MCF 10A (cell line): ENCODE measurements at regions of chrX and their contacts with region 1.

Region 1: GRCh38 chrX:149470955-149471354 is 34.2 kb downstream of the IDS start:
- DNase-seq: peak; percentile 77
- H3K4me3 Mint-ChIP-seq: no peak overlapping the region
- H3K27ac Mint-ChIP-seq: no peak overlapping the region
- H3K4me1 Mint-ChIP-seq: no peaks in the 10 kb centered on the region
- H3K27me3 Mint-ChIP-seq: no peaks in the 10 kb centered on the region
- CTCF ChIP-seq: peak; percentile 82

Region 2: GRCh38 chrX:148133105-148133725 is 1337.7 kb before region 1 on chrX:
- CTCF ChIA-PET with region 1: interaction called, 27 read pairs
- POLR2A ChIA-PET with region 1: interaction called, 6 read pairs
- intact Hi-C with region 1: loop called (anchors 1 kb)
- DNase-seq: peak; percentile 22
- H3K4me3 Mint-ChIP-seq: no peak overlapping the region
- H3K27ac Mint-ChIP-seq: no peak overlapping the region
- H3K4me1 Mint-ChIP-seq: peaks cover 5% of the 10 kb centered on the region
- H3K27me3 Mint-ChIP-seq: no peaks in the 10 kb centered on the region
- CTCF ChIP-seq: no peak

Region 3: GRCh38 chrX:148681605-148682004 is 789.4 kb before region 1 on chrX:
- CTCF ChIA-PET with region 1: no interaction called
- POLR2A ChIA-PET with region 1: no interaction called
- intact Hi-C with region 1: loop called (anchors 5 kb)
- DNase-seq: no peak
- H3K4me3 Mint-ChIP-seq: no peak overlapping the region
- H3K27ac Mint-ChIP-seq: no peak overlapping the region
- H3K4me1 Mint-ChIP-seq: no peaks in the 10 kb centered on the region
- H3K27me3 Mint-ChIP-seq: no peaks in the 10 kb centered on the region
- CTCF ChIP-seq: no peak

Region 4: GRCh38 chrX:149286940-149287349 is 184.0 kb before region 1 on chrX:
- CTCF ChIA-PET with region 1: interaction called, 29 read pairs
- POLR2A ChIA-PET with region 1: no interaction called
- intact Hi-C with region 1: no loop called
- DNase-seq: peak; percentile 65
- H3K4me3 Mint-ChIP-seq: no peak overlapping the region
- H3K27ac Mint-ChIP-seq: no peak overlapping the region
- H3K4me1 Mint-ChIP-seq: no peaks in the 10 kb centered on the region
- H3K27me3 Mint-ChIP-seq: no peaks in the 10 kb centered on the region
- CTCF ChIP-seq: peak; percentile 65

Region 5: GRCh38 chrX:149720021-149720689 is 249.2 kb after region 1 on chrX:
- CTCF ChIA-PET with region 1: no interaction called
- POLR2A ChIA-PET with region 1: no interaction called
- intact Hi-C with region 1: no loop called
- DNase-seq: no peak
- H3K4me3 Mint-ChIP-seq: no peak overlapping the region
- H3K27ac Mint-ChIP-seq: no peak overlapping the region
- H3K4me1 Mint-ChIP-seq: no peaks in the 10 kb centered on the region
- H3K27me3 Mint-ChIP-seq: no peaks in the 10 kb centered on the region
- CTCF ChIP-seq: no peak